GM13976 (cell line): ENCODE measurements at regions of chr2 and their contacts with region 1.

Region 1: GRCh38 chr2:98654699-98655495 is 46.5 kb downstream of the UNC50 start:
- DNase-seq: no peak
- CTCF ChIP-seq: no peak

Region 2: DNA sequence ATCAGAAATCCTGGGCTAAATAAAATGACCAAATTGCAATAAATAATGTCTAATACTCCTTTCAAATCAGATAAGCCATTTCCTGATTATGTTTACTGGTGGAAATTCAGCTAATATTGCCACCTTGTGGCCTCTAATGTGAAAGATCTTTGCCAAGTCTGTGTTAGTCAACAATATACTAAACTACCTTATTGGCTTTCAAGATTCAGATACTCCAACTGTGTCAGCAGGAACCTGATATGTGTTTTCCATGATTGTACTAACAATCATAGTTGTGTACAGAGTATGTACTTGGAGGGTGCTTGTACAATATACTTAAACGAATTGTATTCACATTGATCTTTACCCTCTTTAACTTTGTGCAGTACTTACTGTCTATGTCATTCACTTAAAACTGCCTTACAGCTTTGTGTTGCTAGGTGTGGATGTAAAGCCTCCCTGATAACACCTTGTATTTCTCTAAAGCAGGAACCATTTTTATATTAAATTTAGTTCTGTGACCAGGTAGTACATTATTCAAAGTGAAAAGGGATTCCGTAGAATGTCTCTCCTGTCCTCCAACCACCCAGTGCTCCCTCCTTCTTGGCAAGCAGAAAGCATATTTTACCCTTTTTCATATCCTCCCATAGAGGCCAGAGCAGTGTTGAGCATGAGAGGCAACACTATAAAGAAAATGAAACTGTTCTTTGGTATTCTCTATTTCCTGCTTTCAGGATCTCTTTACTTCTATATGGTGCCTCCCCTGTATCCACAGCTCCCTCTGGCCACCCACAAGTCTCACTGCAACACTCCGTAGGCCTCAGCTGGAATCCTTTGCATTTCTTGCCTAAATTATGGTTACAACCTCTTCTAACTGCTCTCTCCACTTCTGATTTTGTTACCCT is 411.4 kb after region 1 on chr2:
- in situ Hi-C with region 1: loop called (anchors 10 kb)
- DNase-seq: peak; percentile 55
- CTCF ChIP-seq: peak; percentile 44